ENCODE measurements at regions of chr15 and their contacts with region 1.

Region 1: DNA sequence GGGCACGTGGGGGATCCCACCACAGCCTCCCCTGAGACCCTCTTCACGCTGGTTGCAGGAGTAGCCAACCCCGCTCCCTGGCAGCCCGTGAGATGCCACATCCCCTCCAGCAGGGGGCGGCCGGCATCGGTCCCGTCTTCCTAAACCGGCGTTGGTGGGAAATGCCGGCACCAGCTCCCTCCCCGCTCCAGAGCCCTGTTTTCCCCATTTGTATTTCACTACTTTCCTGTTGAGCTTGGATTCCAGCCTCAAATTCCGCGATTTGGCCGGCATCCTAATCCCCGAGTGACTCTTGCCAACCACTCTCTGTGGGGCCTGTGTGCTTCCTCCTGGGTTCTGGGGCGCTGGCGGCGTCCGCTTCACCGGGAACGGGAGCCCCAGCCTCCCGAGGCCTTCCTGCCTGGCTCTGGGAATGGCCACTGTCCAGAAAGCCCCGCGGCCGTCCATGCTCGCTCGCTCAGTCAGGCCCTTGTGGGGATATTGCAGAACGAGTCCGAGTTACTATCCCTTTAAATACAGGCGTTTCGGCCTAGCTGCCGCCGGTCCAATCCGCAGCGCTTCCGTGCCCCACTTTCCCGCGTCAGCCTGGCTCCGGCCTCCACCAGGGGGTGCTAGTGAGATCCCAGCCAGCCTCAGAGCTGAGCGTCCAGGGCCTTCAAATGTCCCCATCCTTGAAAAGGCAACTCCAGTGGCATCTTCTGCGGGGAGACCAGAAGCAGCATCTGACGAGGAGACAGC is 8.1 kb upstream of the ADAMTS17 start:
- DNase-seq: peak; percentile 78 to 87 (median 81)
- H3K4me3 ChIP-seq: peak overlapping the region; percentile 86
- H3K4me3 Mint-ChIP-seq: peak overlapping the region; percentile 88 to 95 (median 94)
- H3K27ac ChIP-seq: peak overlapping the region; percentile 66
- H3K27ac Mint-ChIP-seq: peak overlapping the region; percentile 63 to 96 (median 91)
- H3K4me1 ChIP-seq: peaks cover 9% of the 10 kb centered on the region
- H3K4me1 Mint-ChIP-seq: peaks cover 5 to 9% (median 8%) of the 10 kb centered on the region in 3 donors
- H3K27me3 ChIP-seq: no peaks in the 10 kb centered on the region
- H3K27me3 Mint-ChIP-seq: peaks cover 21 to 33% of the 10 kb centered on the region in 2 donors

Region 2: GRCh38 chr15:99928429-99928981 is 421.4 kb before region 1 on chr15:
- CTCF ChIA-PET with region 1: interaction called, 22 read pairs
- POLR2A ChIA-PET with region 1: no interaction called
- DNase-seq: peak; percentile 84 to 90 (median 88)
- H3K4me3 ChIP-seq: peak overlapping the region; percentile 59
- H3K4me3 Mint-ChIP-seq: peak overlapping the region; percentile 85 to 92 (median 89)
- H3K27ac ChIP-seq: peak overlapping the region; percentile 46
- H3K27ac Mint-ChIP-seq: peak overlapping the region; percentile 70 to 96 (median 92)
- H3K4me1 ChIP-seq: peaks cover 17% of the 10 kb centered on the region
- H3K4me1 Mint-ChIP-seq: peaks cover 12 to 24% (median 22%) of the 10 kb centered on the region in 3 donors
- H3K27me3 ChIP-seq: no peaks in the 10 kb centered on the region
- H3K27me3 Mint-ChIP-seq: peaks cover 4 to 5% of the 10 kb centered on the region in 2 donors

Region 3: DNA sequence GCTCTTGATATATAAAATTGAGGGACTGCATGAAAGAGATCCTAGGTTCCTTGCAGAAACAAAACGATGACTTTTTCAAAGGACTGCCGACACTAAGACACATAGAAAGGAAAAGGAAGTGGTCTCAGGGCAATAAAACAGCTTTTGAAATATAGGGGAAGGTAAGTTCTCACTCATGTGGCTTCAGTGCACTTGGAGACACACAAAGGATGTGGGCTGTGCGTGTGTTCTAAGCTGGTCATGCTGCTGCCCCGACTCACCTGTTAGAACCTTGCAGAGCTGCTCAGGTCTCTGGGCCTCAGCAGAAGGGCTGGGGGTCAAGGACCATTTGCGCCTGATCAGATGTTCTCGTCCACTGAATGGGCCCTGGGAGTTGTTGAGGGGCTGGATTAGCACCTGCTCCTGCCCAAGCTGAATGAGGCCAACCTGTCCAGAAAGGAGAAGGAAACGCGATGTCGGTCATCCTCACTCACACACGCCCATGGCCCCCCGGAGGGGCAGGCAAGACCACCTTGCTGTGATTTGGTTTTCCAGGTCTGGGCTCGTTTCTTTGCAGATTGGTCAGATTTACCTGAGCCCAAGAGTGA is 19.1 kb before region 1 on chr15:
- CTCF ChIA-PET with region 1: interaction called, 61 read pairs
- POLR2A ChIA-PET with region 1: interaction called, 3 read pairs
- DNase-seq: peak in 4 of 5 donors; percentile 9 to 75 (median 64)
- H3K4me3 ChIP-seq: peak overlapping the region; percentile 58
- H3K4me3 Mint-ChIP-seq: peak overlapping the region; percentile 60 to 88 (median 76)
- H3K27ac ChIP-seq: no peak overlapping the region
- H3K27ac Mint-ChIP-seq: peak overlapping the region; percentile 45 to 96 (median 84)
- H3K4me1 ChIP-seq: peaks cover 72% of the 10 kb centered on the region
- H3K4me1 Mint-ChIP-seq: peaks cover 67 to 84% (median 77%) of the 10 kb centered on the region in 3 donors
- H3K27me3 ChIP-seq: no peaks in the 10 kb centered on the region
- H3K27me3 Mint-ChIP-seq: no peaks in the 10 kb centered on the region

Region 4: DNA sequence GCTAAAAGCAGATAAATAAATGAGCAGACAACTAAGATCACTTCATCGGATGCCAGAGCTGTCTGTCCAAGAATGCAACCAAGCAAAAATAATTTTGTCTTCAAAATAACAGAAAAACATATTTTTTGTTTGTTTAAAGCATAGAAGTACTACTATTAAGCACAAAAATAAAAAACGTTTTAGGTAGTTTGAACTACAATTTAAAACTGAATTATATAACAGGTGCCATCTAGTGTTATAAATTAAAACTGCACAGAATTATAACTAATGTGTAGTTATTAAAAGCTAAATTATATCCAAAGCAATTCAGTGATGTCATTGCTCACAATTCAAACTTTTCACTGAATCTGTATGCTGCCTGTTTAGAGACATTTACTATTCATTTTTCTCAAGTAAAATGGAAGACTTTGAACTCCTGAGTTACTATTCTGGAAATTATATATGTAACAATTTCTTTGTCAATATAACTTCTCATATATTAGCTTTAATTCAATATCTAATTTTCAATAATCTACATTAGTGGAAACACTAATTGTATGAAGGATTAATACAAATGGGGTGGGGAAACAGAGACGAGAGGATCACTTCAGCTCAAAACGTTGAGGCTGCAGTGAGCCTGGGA is 222.6 kb after region 1 on chr15:
- CTCF ChIA-PET with region 1: interaction called, 37 read pairs
- POLR2A ChIA-PET with region 1: no interaction called
- DNase-seq: peak in 1 of 5 donors; percentile 40
- H3K4me3 ChIP-seq: no peak overlapping the region
- H3K4me3 Mint-ChIP-seq: peak overlapping the region in 1 of 7 donors; percentile 13
- H3K27ac ChIP-seq: no peak overlapping the region
- H3K27ac Mint-ChIP-seq: peak overlapping the region in 4 of 8 donors; percentile 8 to 27 (median 18)
- H3K4me1 ChIP-seq: peaks cover 23% of the 10 kb centered on the region
- H3K4me1 Mint-ChIP-seq: peaks cover 26 to 46% (median 41%) of the 10 kb centered on the region in 3 donors
- H3K27me3 ChIP-seq: no peaks in the 10 kb centered on the region
- H3K27me3 Mint-ChIP-seq: no peaks in the 10 kb centered on the region

Region 5: GRCh38 chr15:100596792-100597191 is 246.9 kb after region 1 on chr15:
- CTCF ChIA-PET with region 1: interaction called, 24 read pairs
- POLR2A ChIA-PET with region 1: no interaction called
- DNase-seq: peak; percentile 60 to 94 (median 86)
- H3K4me3 ChIP-seq: peak overlapping the region; percentile 47
- H3K4me3 Mint-ChIP-seq: peak overlapping the region; percentile 82 to 93 (median 84)
- H3K27ac ChIP-seq: peak overlapping the region; percentile 64
- H3K27ac Mint-ChIP-seq: peak overlapping the region; percentile 90 to 100 (median 96)
- H3K4me1 ChIP-seq: peaks cover 90% of the 10 kb centered on the region
- H3K4me1 Mint-ChIP-seq: peaks cover 54 to 71% (median 71%) of the 10 kb centered on the region in 3 donors
- H3K27me3 ChIP-seq: no peaks in the 10 kb centered on the region
- H3K27me3 Mint-ChIP-seq: no peaks in the 10 kb centered on the region

Region 6: DNA sequence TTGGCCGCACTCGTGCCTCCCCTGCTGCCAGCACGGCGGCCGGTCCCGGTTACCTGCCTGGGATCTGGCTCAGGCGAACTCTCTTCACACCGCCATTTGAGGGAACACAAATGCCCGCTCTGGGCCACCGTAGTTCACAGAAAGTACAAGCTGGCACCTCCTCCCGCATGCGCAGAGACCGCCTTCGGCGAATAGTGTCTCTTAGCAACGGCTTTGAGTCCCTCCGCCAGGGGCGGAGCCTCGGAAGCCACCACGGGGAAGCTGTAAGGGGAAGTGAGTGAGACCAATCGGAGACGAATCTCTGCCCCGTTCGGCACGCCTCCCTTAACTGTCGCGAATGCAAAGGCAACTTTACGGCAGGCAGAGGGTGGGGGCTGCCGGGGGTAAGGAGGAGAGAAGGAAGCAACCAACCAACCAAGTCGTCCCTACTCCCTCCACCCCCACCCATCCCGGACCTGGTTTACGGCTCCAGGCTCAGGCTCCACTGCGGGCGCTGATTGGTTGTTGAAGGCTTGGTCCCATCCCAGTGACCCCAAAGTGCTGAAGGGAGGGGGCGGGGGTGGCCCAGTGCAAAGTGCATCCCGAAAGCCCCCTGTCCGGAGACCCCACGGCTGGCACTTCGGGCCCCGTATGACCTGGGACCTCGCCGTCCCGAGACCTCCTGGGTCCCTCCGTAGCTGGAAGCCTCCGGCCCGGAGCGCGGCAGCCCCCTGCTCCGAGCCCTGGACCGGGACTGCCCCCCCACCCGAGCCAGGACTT is 252.4 kb after region 1 on chr15 and contains the starts of genes ASB7 and LINS1:
- CTCF ChIA-PET with region 1: interaction called, 24 read pairs
- POLR2A ChIA-PET with region 1: no interaction called
- DNase-seq: peak; percentile 100
- H3K4me3 ChIP-seq: peak within 1 kb of the TSS; percentile 96
- H3K4me3 Mint-ChIP-seq: no peak within 1 kb of the TSS
- H3K27ac ChIP-seq: peak within 1 kb of the TSS; percentile 87
- H3K27ac Mint-ChIP-seq: peak within 1 kb of the TSS in 7 of 8 donors; percentile 84 to 96 (median 95)
- H3K4me1 ChIP-seq: peaks cover 65% of the 10 kb centered on the region
- H3K4me1 Mint-ChIP-seq: peaks cover 39 to 60% (median 59%) of the 10 kb centered on the region in 3 donors
- H3K27me3 ChIP-seq: no peaks in the 10 kb centered on the region
- H3K27me3 Mint-ChIP-seq: no peaks in the 10 kb centered on the region
- total RNA-seq, gene ASB7: 14.9 to 16.0 TPM
- total RNA-seq, gene LINS1: 29.6 to 31.0 TPM

Measured in CD8-positive, alpha-beta memory T cell (primary cell).